ENCODE measurements at regions of chr2 and their contacts with region 1.

Region 1: GRCh38 chr2:232420463-232421188 is 14.0 kb downstream of the ALPG start:
- DNase-seq: peak in 1 of 2 experiments; percentile 76
- H3K4me3 ChIP-seq: peak overlapping the region; percentile 69 to 95 (median 76)
- H3K27ac ChIP-seq: peak overlapping the region; percentile 27
- H3K4me1 ChIP-seq: peaks cover 8 to 43% (median 31%) of the 10 kb centered on the region in 4 experiments
- H3K27me3 ChIP-seq: peaks cover 12 to 40% (median 36%) of the 10 kb centered on the region in 4 experiments
- CTCF ChIP-seq: no peak
- EP300 ChIP-seq: no peak
- POLR2A ChIP-seq: no peak
- RAD21 ChIP-seq: no peak

Region 2: GRCh38 chr2:232385660-232386489 is 34.8 kb before region 1 on chr2:
- CTCF ChIA-PET with region 1: interaction called, 7 read pairs
- POLR2A ChIA-PET with region 1: interaction called, 57 read pairs
- DNase-seq: no peak
- H3K4me3 ChIP-seq: peak overlapping the region; percentile 55 to 65 (median 63)
- H3K27ac ChIP-seq: no peak overlapping the region
- H3K4me1 ChIP-seq: peaks cover 5 to 32% (median 15%) of the 10 kb centered on the region in 4 experiments
- H3K27me3 ChIP-seq: peaks cover 22 to 66% (median 66%) of the 10 kb centered on the region in 4 experiments
- CTCF ChIP-seq: no peak
- EP300 ChIP-seq: no peak
- POLR2A ChIP-seq: no peak
- RAD21 ChIP-seq: 0 out of 4 replicates have a peak, but pooled peaks of 1 of the 2 experiments have one; percentile 2

Region 3: DNA sequence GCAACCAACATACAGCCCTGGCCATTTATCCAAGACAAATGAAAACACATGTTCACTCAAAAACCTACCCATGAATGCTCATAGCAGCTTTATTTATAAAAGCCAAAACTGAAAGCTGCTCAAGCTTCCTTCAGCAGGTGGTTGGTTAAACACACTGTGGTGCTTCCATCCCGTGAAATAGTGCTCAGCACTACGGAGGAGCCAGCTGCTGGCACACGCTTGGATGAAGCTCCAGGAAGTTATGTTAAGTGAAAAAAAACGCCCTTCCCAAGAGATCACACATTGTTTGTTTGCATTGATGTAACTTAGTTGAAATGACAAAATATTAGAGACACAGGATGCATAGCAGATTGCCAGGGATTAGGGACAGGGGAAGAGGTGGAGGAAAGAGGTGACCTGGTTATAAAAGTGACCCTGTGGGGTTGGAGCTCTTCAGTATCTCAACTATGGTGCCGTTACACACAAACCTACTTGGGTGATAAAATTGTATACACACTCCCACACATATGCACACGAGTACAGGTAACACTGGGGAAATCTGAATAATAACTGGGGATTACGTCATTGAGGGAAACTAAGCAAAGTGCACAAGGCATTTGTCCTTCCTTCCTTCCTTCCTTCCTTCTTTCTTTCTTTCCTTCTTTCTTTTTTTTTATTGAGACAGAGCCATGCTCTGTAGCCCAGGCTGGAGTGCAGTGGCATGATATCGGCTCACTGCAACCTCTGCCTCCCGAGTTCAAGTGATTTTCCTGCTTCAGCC is 20.2 kb before region 1 on chr2:
- CTCF ChIA-PET with region 1: interaction called, 4 read pairs
- POLR2A ChIA-PET with region 1: interaction called, 70 read pairs
- DNase-seq: no peak
- H3K4me3 ChIP-seq: no peak overlapping the region
- H3K27ac ChIP-seq: no peak overlapping the region
- H3K4me1 ChIP-seq: no peaks in the 10 kb centered on the region
- H3K27me3 ChIP-seq: no peaks in the 10 kb centered on the region
- CTCF ChIP-seq: no peak
- EP300 ChIP-seq: no peak
- POLR2A ChIP-seq: no peak
- RAD21 ChIP-seq: no peak

Region 4: GRCh38 chr2:232406571-232407310 is 13.9 kb before region 1 on chr2 and contains the start of gene ALPG:
- CTCF ChIA-PET with region 1: interaction called, 5 read pairs
- POLR2A ChIA-PET with region 1: interaction called, 70 read pairs
- DNase-seq: no peak
- H3K4me3 ChIP-seq: no peak within 1 kb of the TSS
- H3K27ac ChIP-seq: no peak within 1 kb of the TSS
- H3K4me1 ChIP-seq: peaks cover 0 to 2% (median 0%) of the 10 kb centered on the region in 4 experiments; a peak in 2 of 7 replicates
- H3K27me3 ChIP-seq: no peaks in the 10 kb centered on the region
- CTCF ChIP-seq: no peak
- EP300 ChIP-seq: no peak
- POLR2A ChIP-seq: no peak
- RAD21 ChIP-seq: no peak
- total RNA-seq, gene ALPG: 0.56 and 0.75 TPM in 2 replicates

Region 5: GRCh38 chr2:232432598-232433184 is 12.1 kb after region 1 on chr2:
- CTCF ChIA-PET with region 1: interaction called, 14 read pairs
- POLR2A ChIA-PET with region 1: interaction called, 12 read pairs
- DNase-seq: peak in 1 of 2 experiments; percentile 87
- H3K4me3 ChIP-seq: no peak overlapping the region
- H3K27ac ChIP-seq: peak overlapping the region; percentile 27; the same call in 1 of the 2 replicates
- H3K4me1 ChIP-seq: peaks cover 0 to 9% (median 7%) of the 10 kb centered on the region in 4 experiments; a peak in 6 of 7 replicates
- H3K27me3 ChIP-seq: peaks cover 0 to 2% (median 0%) of the 10 kb centered on the region in 4 experiments; a peak in 1 of 7 replicates
- CTCF ChIP-seq: peak in 2 of 3 experiments; percentile 50 to 78; a peak in 2 of 4 replicates
- EP300 ChIP-seq: no peak
- POLR2A ChIP-seq: no peak
- RAD21 ChIP-seq: peak; percentile 24 to 42; a peak in 3 of 4 replicates

Measured in H1 (cell line).